AG04449 (cell line): ENCODE measurements at regions of chr1 and their contacts with region 1.

Region 1: GRCh38 chr1:201361652-201362504 is 15.6 kb downstream of the TNNT2 start:
- DNase-seq: no peak
- H3K4me3 ChIP-seq: no peak overlapping the region
- CTCF ChIP-seq: peak; percentile 88

Region 2: DNA sequence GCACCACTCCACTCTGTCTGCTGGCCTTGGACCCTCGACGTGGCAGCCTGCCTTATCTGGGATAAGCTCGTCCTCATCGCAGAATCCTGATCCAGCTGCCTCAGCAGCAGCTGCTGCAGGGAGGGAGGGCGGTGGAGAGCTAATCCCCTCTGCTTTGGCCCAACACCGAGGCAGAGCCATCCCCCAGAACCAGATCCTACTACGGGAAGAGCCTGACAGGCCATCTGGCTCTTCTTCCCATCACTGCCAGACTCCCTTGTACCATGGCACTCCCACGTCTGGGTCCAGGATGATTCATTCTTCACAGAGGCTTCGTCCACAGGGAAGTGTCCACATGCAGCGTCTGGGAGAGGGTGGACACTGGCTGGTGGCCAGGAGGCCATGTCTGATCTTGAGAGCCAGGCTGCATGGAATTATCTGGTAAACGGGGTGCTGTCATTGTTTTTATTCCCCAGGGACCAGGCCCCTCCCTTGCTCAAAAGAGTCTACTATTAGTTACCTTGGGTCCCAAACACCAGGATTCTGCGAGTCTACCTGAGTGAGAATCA is 93.2 kb before region 1 on chr1:
- CTCF ChIA-PET with region 1: interaction called, 61 read pairs
- POLR2A ChIA-PET with region 1: interaction called, 4 read pairs
- DNase-seq: peak; percentile 38
- H3K4me3 ChIP-seq: no peak overlapping the region
- CTCF ChIP-seq: no peak

Region 3: DNA sequence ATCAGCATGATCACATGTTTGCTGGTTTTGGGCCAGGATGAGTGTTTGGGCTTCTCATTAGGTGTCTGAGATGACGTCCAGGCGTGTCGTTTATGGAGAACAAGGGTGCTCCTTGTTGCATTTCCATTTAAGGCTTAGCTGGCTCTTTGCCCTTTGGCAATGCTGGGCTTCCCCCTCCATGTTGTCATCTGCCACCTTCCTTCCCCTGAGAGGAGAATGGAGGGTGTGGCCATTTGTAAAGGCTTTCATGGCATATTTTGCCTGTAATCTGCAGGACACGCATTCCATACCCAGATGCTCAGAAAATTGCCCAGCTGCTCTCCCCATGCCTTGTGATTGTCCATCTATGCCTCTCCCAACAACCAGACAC is 50.9 kb before region 1 on chr1:
- CTCF ChIA-PET with region 1: interaction called, 10 read pairs
- POLR2A ChIA-PET with region 1: no interaction called
- DNase-seq: no peak
- H3K4me3 ChIP-seq: no peak overlapping the region
- CTCF ChIP-seq: no peak

Region 4: DNA sequence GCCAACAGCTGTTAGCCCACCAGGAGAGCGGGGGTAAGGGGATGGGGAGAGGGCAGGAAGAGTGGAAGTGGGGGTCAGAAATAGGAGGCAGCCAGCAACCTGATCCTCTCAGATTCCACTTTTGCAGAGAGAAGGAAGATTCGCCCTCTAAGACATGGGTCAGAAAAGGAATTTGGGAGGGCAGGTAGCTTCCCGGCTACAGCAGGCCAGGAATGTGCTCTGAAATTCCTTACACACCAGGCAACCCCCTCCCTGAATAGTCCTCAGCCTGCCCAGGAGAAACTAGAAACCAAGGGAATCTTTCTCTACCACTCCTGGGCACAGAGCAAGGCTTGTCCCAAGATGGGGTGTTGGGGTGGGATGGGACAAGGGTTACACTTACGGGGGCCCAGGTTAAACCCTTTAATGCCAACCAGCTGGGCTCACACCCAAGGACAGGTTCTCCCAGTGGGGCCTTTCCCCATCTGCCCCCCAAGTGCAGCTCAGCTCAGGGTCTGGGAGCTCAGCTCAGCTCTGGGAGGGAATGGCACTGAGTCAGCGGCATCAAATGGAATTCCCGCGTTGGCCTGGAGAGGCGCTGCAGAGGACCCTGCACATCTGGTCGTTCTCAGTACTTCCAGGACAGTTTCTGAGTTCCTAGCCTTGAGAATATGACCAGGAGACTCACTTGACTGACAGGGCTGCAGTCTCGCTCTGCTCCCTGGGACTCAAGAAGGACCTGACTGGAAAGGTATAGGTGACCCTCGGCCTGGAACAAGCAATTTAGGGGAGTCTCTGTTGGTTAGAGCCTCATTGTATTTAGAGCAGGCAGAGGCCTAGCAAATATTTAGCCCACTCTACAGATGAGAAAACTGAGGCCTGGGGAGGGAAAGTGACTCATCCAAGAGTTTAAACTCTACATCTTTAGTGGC is 14.8 kb after region 1 on chr1:
- CTCF ChIA-PET with region 1: interaction called, 55 read pairs
- POLR2A ChIA-PET with region 1: interaction called, 3 read pairs
- DNase-seq: no peak
- H3K4me3 ChIP-seq: no peak overlapping the region
- CTCF ChIP-seq: peak; percentile 83

Region 5: DNA sequence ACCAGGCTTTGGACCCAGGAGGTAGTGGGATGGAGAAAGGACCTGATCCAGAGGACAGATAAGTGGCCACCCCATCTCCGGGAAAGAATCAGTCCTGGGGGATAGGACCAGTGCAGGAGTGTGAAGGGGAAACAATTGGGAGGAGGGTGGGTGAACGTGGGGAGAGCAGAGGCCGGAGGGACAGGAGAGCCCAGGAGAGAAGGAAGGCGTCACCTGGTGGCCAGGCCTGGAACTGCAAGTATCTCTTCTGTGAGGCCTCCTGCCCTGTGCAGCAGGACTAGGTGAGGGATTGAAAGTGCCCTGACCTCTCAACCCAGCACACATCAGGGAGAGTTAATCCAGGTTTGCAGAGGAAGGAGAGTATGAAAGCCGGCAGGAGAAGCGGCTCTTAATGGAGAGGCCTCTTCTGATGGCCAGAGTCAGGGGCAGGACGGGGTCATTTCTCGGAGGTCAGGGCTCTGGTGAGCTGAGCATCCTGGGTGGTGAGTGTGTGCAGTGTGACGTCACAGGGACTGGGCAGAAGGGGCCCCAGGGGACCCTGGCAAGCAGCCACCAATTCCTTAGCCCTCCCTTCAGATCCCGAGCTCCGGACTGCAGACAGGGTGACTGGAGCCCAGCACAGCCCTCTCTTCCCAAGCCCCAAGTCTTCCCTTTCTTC is 46.4 kb after region 1 on chr1:
- CTCF ChIA-PET with region 1: interaction called, 35 read pairs
- POLR2A ChIA-PET with region 1: no interaction called
- DNase-seq: peak; percentile 10
- H3K4me3 ChIP-seq: no peak overlapping the region
- CTCF ChIP-seq: peak; percentile 99

Region 6: DNA sequence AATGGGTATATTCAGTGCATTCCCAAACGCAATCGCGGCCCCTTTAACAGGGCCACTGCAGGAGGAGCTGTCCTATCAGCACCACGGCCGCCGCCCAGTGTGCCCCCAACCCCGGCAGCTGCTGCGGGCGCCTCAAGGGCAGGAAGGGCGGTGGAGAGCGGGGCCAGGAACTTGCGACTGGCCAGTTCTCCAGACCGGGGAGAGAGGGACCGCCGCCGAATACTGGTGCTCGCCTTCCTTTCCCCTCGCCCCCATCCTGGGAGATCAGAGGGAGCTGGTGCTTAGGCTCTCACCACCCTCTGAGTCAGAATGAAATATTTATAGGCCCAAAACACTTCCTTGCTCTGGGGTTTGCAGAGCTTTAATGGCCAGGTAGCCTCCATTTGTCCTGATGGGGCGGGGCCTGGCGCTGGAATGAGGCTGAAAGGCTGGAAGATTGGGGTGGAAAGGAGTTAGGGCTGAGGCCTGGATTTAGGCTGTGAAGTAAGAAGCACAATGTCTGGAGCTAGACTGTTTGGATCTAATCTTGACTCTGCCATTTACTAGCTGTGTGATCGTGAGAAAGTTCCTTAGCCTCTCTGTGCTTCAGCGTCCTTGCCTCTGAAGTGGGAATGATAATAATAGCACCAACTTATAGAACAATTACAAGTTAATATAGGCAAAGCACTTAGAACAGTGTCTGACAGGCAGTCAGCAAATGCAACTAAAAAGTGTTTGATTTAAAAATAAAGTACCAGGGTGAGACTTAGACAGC is 252.6 kb after region 1 on chr1:
- CTCF ChIA-PET with region 1: no interaction called
- POLR2A ChIA-PET with region 1: no interaction called
- DNase-seq: no peak
- H3K4me3 ChIP-seq: no peak overlapping the region
- CTCF ChIP-seq: no peak

Region 7: GRCh38 chr1:202101184-202102005 is 739.5 kb after region 1 on chr1:
- CTCF ChIA-PET with region 1: no interaction called
- POLR2A ChIA-PET with region 1: no interaction called
- DNase-seq: no peak
- H3K4me3 ChIP-seq: no peak overlapping the region
- CTCF ChIP-seq: no peak